Gastrocnemius medialis (tissue), 4 donors: ENCODE measurements at regions of chr10 and their contacts with region 1.

Region 1: DNA sequence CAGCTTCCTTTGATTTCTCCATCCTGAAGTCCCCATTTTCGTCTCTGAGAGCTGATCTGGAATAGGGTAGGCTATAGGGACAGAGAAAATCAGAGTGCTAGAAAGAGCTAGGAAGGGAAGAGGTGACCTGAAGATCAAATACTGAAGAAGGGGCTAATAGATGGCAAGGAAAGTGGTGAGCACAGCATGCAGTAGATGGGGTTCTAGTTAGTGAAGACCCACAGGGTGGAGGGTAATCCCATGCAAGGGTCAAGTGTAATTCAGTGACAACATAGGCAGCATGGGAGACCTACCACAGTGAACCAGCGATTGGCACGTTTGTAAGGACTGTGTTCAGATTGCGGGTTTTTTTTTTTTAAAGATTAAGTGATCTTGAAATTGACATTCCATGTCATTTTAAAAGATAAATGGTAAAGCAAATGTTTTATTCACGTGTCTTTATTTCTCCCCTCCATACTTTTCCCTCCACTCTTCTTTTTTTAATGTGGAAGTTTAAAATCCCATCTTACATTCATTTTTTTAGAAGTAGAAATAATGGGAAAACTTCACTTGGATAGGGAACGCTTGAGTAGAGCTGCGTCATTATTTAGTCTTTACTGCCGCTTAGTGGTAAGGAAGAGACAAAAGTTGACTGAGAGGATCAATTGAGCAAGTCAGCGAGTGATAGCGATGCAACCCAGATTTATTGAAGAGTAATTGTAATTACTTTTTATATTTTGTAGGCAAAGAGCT is 21.0 kb upstream of the ABI1 start:
- DNase-seq: no peak
- ATAC-seq: peak; percentile 86 to 88
- H3K4me3 ChIP-seq: no peak overlapping the region
- H3K27ac ChIP-seq: no peak overlapping the region
- H3K4me1 ChIP-seq: no peaks in the 10 kb centered on the region
- H3K27me3 ChIP-seq: no peaks in the 10 kb centered on the region
- CTCF ChIP-seq: peak; percentile 52 to 85 (median 65)
- POLR2A ChIP-seq: no peak

Region 2: GRCh38 chr10:26334932-26335573 is 546.7 kb before region 1 on chr10:
- in situ Hi-C with region 1: loop called in 1 of 4 experiments (anchors 25 kb)
- intact Hi-C with region 1: no loop called
- DNase-seq: no peak
- ATAC-seq: no peak
- H3K4me3 ChIP-seq: no peak overlapping the region
- H3K27ac ChIP-seq: no peak overlapping the region
- H3K4me1 ChIP-seq: no peaks in the 10 kb centered on the region
- H3K27me3 ChIP-seq: no peaks in the 10 kb centered on the region
- CTCF ChIP-seq: peak in 3 of 5 experiments; percentile 5 to 37 (median 13)
- POLR2A ChIP-seq: no peak

Region 3: DNA sequence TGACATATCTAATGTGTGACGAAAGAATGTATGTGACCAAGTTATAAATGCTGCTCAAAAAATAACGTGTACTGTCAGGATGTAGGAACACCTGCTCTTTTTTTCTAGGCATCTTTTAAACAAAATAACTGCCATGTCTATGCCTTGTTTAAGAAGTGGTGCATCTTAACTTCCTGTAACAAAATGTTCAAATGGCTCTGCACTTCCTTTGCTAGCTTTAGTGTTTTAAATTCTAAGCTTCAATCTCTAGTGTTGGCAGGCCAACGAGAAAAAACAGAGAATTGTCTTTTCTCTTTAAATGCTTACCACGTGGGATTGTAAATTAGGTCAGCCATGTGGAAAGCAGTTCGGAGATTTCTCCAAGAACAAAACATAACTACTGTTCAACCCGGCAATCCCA is 198.8 kb before region 1 on chr10:
- in situ Hi-C with region 1: loop called in 3 of 4 experiments (anchors 5 to 10 kb)
- intact Hi-C with region 1: loop called (anchors 5 kb)
- DNase-seq: no peak
- ATAC-seq: no peak
- H3K4me3 ChIP-seq: no peak overlapping the region
- H3K27ac ChIP-seq: no peak overlapping the region
- H3K4me1 ChIP-seq: peaks cover 0 to 3% of the 10 kb centered on the region in 2 donors
- H3K27me3 ChIP-seq: peaks cover 0 to 2% (median 0%) of the 10 kb centered on the region in 3 donors
- CTCF ChIP-seq: no peak
- POLR2A ChIP-seq: no peak

Region 4: GRCh38 chr10:26689399-26689798 is 192.4 kb before region 1 on chr10:
- in situ Hi-C with region 1: loop called in 3 of 4 experiments (anchors 5 to 10 kb)
- intact Hi-C with region 1: loop called (anchors 5 kb)
- DNase-seq: no peak
- ATAC-seq: no peak
- H3K4me3 ChIP-seq: no peak overlapping the region
- H3K27ac ChIP-seq: no peak overlapping the region
- H3K4me1 ChIP-seq: peaks cover 0 to 3% of the 10 kb centered on the region in 2 donors
- H3K27me3 ChIP-seq: peaks cover 0 to 10% (median 0%) of the 10 kb centered on the region in 3 donors
- CTCF ChIP-seq: no peak
- POLR2A ChIP-seq: no peak

Region 5: GRCh38 chr10:26725837-26726727 is 155.7 kb before region 1 on chr10:
- in situ Hi-C with region 1: loop called in 3 of 4 experiments (anchors 5 to 10 kb)
- intact Hi-C with region 1: loop called (anchors 1 kb)
- DNase-seq: peak; percentile 25 to 35
- ATAC-seq: no peak
- H3K4me3 ChIP-seq: no peak overlapping the region
- H3K27ac ChIP-seq: no peak overlapping the region
- H3K4me1 ChIP-seq: no peaks in the 10 kb centered on the region
- H3K27me3 ChIP-seq: no peaks in the 10 kb centered on the region
- CTCF ChIP-seq: peak; percentile 65 to 74 (median 70)
- POLR2A ChIP-seq: no peak